Mammary epithelial cell (primary cell): ENCODE measurements at regions of chr10 and their contacts with region 1.

Region 1: GRCh38 chr10:28137907-28138880 is 139.3 kb upstream of the ODAD2 start:
- DNase-seq: peak; percentile 1
- H3K4me3 ChIP-seq: no peak overlapping the region
- H3K27ac ChIP-seq: no peak overlapping the region
- H3K4me1 ChIP-seq: no peaks in the 10 kb centered on the region
- H3K27me3 ChIP-seq: no peaks in the 10 kb centered on the region
- CTCF ChIP-seq: no peak

Region 2: GRCh38 chr10:27783660-27784059 is 354.5 kb before region 1 on chr10:
- CTCF ChIA-PET with region 1: no interaction called
- dilution Hi-C with region 1: no loop called
- in situ Hi-C with region 1: no loop called
- intact Hi-C with region 1: loop called (anchors 1 kb)
- DNase-seq: peak; percentile 55
- H3K4me3 ChIP-seq: no peak overlapping the region
- H3K27ac ChIP-seq: no peak overlapping the region
- H3K4me1 ChIP-seq: no peaks in the 10 kb centered on the region
- H3K27me3 ChIP-seq: peaks cover 3% of the 10 kb centered on the region
- CTCF ChIP-seq: peak; percentile 29 to 52

Region 3: GRCh38 chr10:28179006-28179742 is 41.0 kb after region 1 on chr10:
- CTCF ChIA-PET with region 1: no interaction called
- dilution Hi-C with region 1: no loop called
- in situ Hi-C with region 1: no loop called
- intact Hi-C with region 1: no loop called
- DNase-seq: peak; percentile 26
- H3K4me3 ChIP-seq: no peak overlapping the region
- H3K27ac ChIP-seq: no peak overlapping the region
- H3K4me1 ChIP-seq: peaks cover 5% of the 10 kb centered on the region
- H3K27me3 ChIP-seq: no peaks in the 10 kb centered on the region
- CTCF ChIP-seq: peak; percentile 57 to 68